Heart right ventricle (tissue), 16 donors: ENCODE measurements at regions of chr3 and their contacts with region 1.

Region 1: GRCh38 chr3:73490453-73491286 is 134.1 kb downstream of the PDZRN3 start:
- DNase-seq: peak; percentile 23 to 52
- ATAC-seq: peak; percentile 49 to 91 (median 80)
- H3K4me3 ChIP-seq: no peak overlapping the region
- H3K27ac ChIP-seq: peak overlapping the region in 9 of 10 donors; percentile 17 to 77 (median 57)
- H3K4me1 ChIP-seq: peaks cover 7 to 69% (median 56%) of the 10 kb centered on the region in 9 donors
- H3K27me3 ChIP-seq: no peaks in the 10 kb centered on the region
- CTCF ChIP-seq: no peak

Region 2: GRCh38 chr3:72618739-72619138 is 871.9 kb before region 1 on chr3:
- intact Hi-C with region 1: no loop called
- DNase-seq: no peak
- ATAC-seq: no peak
- H3K4me3 ChIP-seq: no peak overlapping the region
- H3K27ac ChIP-seq: no peak overlapping the region
- H3K4me1 ChIP-seq: peaks cover 0 to 12% (median 4%) of the 10 kb centered on the region in 9 donors
- H3K27me3 ChIP-seq: no peaks in the 10 kb centered on the region
- CTCF ChIP-seq: no peak

Region 3: DNA sequence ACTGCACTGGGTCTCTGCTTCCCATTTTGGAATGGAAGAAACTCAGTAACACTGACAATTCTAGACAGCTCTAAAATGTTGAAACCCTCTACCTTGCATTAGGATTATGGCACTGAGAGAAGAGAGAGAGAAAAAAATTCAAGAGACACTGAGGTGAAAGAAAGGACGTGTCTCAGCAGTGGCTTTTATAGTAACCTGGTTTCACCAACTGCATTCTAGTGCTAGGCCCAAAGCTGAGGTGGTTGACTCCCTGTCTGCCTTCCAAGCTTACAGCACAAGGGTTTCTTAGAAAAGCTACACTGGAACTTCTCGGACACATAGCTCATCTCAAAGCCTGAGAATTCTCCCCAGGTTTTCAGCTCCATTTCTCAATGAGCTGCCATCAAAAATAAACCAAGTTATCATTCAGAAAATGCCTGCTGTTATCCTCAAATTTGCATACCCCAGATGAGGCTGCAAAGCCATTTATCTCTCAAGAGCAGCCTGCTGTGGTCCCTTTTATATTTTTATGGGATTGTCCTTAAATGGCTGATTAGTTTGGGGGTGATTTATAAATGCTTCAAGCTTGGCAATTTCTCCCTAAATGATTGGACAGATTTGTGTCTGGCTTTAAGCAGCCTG is 149.3 kb before region 1 on chr3:
- intact Hi-C with region 1: loop called in 1 of 10 experiments (anchors 10 kb)
- DNase-seq: no peak
- ATAC-seq: peak in 5 of 8 donors; percentile 20 to 50 (median 34)
- H3K4me3 ChIP-seq: no peak overlapping the region
- H3K27ac ChIP-seq: peak overlapping the region in 6 of 10 donors; percentile 0 to 73 (median 27)
- H3K4me1 ChIP-seq: peaks cover 0 to 15% (median 0%) of the 10 kb centered on the region in 9 donors
- H3K27me3 ChIP-seq: no peaks in the 10 kb centered on the region
- CTCF ChIP-seq: no peak

Region 4: DNA sequence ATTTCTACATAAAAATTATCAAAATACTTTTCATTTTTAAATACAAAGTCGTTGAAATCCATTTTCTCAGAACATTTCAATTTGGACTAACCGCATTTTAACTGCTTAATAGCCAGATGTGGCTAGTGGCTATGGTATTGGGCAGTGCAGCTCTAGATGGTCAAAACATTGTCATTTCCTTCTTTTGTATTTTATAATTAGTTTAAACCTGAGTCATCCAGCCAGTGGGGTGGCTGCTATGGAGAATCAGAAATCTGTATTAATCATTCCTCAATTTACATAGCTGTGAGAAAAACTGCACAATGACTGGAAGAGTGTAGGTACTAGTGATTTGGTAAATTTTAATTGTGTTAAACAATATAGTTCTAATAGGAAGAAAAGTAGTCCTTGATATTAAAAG is 111.2 kb before region 1 on chr3:
- intact Hi-C with region 1: no loop called
- DNase-seq: no peak
- ATAC-seq: no peak
- H3K4me3 ChIP-seq: no peak overlapping the region
- H3K27ac ChIP-seq: no peak overlapping the region
- H3K4me1 ChIP-seq: no peaks in the 10 kb centered on the region
- H3K27me3 ChIP-seq: no peaks in the 10 kb centered on the region
- CTCF ChIP-seq: no peak

Region 5: GRCh38 chr3:73451306-73451944 is 39.2 kb before region 1 on chr3:
- intact Hi-C with region 1: loop called in 3 of 10 experiments (anchors 1 to 5 kb)
- DNase-seq: no peak
- ATAC-seq: peak in 4 of 8 donors; percentile 19 to 53 (median 42)
- H3K4me3 ChIP-seq: no peak overlapping the region
- H3K27ac ChIP-seq: peak overlapping the region in 1 of 10 donors; percentile 8
- H3K4me1 ChIP-seq: peaks cover 0 to 76% (median 31%) of the 10 kb centered on the region in 9 donors
- H3K27me3 ChIP-seq: no peaks in the 10 kb centered on the region
- CTCF ChIP-seq: no peak

Region 6: GRCh38 chr3:73459711-73460110 is 31.0 kb before region 1 on chr3:
- intact Hi-C with region 1: loop called in 2 of 10 experiments (anchors 5 kb)
- DNase-seq: no peak
- ATAC-seq: no peak
- H3K4me3 ChIP-seq: no peak overlapping the region
- H3K27ac ChIP-seq: no peak overlapping the region
- H3K4me1 ChIP-seq: peaks cover 3 to 27% (median 14%) of the 10 kb centered on the region in 9 donors
- H3K27me3 ChIP-seq: no peaks in the 10 kb centered on the region
- CTCF ChIP-seq: no peak

Region 7: GRCh38 chr3:73547427-73548248 is 57.0 kb after region 1 on chr3:
- intact Hi-C with region 1: no loop called
- DNase-seq: no peak
- ATAC-seq: peak; percentile 39 to 78 (median 52)
- H3K4me3 ChIP-seq: no peak overlapping the region
- H3K27ac ChIP-seq: peak overlapping the region in 9 of 10 donors; percentile 14 to 79 (median 47)
- H3K4me1 ChIP-seq: peaks cover 11 to 61% (median 30%) of the 10 kb centered on the region in 9 donors
- H3K27me3 ChIP-seq: no peaks in the 10 kb centered on the region
- CTCF ChIP-seq: no peak